ENCODE measurements at regions of chr12 and their contacts with region 1.

Region 1: DNA sequence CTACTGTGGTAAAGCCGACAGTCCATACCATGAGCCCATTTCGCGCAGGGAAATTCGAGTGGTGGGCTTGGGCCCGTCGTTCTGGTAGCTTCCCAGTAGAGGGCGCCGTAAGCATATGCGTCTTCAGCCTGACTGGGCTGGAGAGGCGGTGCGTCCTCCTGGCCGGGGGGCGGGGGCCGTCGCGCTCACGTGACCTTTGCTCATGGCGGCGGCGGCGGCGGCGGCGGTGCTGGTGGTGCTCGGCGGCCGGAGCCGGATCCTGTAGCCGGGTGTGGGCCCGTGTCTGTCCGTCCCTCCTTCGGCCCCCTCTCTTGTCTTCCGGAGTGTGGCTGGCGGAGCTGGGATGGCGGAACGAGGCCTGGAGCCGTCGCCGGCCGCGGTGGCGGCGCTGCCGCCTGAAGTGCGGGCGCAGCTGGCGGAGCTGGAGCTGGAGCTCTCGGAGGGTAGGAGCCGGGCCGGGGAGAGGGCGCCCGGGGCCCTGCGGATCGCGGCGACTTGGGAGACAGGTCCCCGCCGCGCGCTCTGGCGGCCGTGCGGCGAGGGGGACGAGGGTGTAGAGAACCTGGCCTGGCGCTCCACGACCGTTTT is at the start of gene DIP2B:
- DNase-seq: peak; percentile 96
- ATAC-seq: peak; percentile 95 to 99 (median 96)
- H3K4me3 ChIP-seq: peak within 1 kb of the TSS; percentile 68 to 95 (median 86)
- H3K27ac ChIP-seq: peak within 1 kb of the TSS; percentile 74 to 97 (median 94)
- H3K4me1 ChIP-seq: peaks cover 4 to 53% (median 46%) of the 10 kb centered on the region in 9 donors
- H3K27me3 ChIP-seq: no peaks in the 10 kb centered on the region
- CTCF ChIP-seq: peak; percentile 87 to 98 (median 94)
- total RNA-seq, gene DIP2B: 11.7 to 21.5 (median 16.2) TPM

Region 2: GRCh38 chr12:50572271-50572670 is 67.4 kb after region 1 on chr12:
- intact Hi-C with region 1: loop called in 2 of 10 experiments (anchors 5 kb)
- DNase-seq: no peak
- ATAC-seq: peak in 5 of 8 donors; percentile 43 to 77 (median 64)
- H3K4me3 ChIP-seq: no peak overlapping the region
- H3K27ac ChIP-seq: peak overlapping the region in 2 of 10 donors; percentile 2 to 54
- H3K4me1 ChIP-seq: peaks cover 14 to 78% (median 71%) of the 10 kb centered on the region in 9 donors
- H3K27me3 ChIP-seq: no peaks in the 10 kb centered on the region
- CTCF ChIP-seq: no peak

Region 3: DNA sequence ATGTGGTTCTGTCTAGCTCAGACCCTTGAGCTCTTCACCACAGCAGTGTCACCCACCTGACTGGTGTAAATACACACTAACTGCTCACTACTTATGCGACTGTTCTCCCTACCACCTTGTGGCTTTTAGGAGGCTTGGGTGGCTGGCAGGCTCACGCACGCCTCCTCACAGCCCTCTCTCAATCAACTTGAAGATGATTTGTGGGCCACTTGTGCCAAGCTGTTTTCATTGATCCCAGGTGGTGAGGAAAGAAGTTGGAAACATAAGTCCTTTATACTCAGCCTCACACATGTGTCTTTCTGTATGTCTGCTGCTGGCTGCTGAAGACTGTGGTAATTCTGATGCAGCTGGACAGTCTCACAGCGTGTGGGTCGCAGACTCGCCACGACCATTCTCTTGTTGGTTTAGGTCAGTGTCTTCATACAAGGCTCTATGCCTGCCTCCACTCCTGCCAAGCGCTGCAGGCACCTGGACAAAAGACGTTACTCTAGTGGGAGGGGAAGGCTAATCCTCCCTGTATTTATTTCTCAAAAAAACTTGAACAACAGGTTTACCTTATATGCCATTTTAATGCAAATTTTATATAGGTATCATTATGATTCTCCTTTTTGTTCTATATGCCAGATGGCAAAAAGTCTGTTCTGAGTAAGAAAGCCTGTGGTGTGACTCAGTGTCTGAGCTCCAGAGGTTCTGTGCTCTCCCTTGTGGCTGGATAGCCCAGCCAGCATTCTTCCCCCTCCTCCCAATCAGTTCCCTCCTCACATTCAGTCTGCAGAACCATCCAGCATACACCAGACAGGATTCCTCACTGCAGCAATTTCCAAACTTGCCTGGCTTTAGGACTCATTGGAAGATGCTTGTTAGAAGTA is 115.5 kb after region 1 on chr12:
- intact Hi-C with region 1: loop called in 1 of 10 experiments (anchors 5 kb)
- DNase-seq: no peak
- ATAC-seq: peak in 7 of 8 donors; percentile 58 to 77 (median 66)
- H3K4me3 ChIP-seq: no peak overlapping the region
- H3K27ac ChIP-seq: peak overlapping the region in 1 of 10 donors; percentile 21
- H3K4me1 ChIP-seq: peaks cover 0 to 76% (median 63%) of the 10 kb centered on the region in 9 donors
- H3K27me3 ChIP-seq: no peaks in the 10 kb centered on the region
- CTCF ChIP-seq: no peak

Region 4: DNA sequence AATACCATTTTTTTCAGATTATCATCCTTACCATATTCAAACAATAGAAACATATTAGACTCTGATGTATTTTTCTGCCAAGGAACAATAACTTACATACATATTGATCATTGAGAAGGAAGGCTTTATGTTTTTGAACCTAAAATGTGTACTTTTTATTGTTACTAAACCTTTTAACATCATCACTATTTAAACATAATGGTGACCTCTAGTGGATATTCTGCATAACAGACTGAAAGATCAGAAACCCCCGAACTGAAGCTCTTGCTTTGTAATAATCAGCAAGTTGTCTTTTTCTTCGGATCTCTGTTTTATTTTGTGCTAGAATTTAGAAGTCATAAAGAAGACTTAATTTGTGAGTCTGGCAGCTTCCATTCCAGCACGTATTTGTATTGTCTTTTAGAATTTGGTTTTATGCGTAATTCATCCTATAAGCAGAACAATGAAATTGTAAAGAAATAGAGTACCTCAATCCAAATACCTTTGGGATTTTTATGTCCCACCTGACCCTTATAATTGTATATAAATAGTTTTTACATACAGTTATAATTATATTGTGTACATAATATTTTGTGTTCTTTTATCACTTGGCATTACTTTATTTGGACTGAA is 133.1 kb after region 1 on chr12:
- intact Hi-C with region 1: loop called (anchors 1 to 5 kb)
- DNase-seq: no peak
- ATAC-seq: peak in 3 of 8 donors; percentile 50 to 58 (median 56)
- H3K4me3 ChIP-seq: no peak overlapping the region
- H3K27ac ChIP-seq: no peak overlapping the region
- H3K4me1 ChIP-seq: peaks cover 0 to 50% (median 39%) of the 10 kb centered on the region in 9 donors
- H3K27me3 ChIP-seq: no peaks in the 10 kb centered on the region
- CTCF ChIP-seq: peak; percentile 38 to 85 (median 72)

Region 5: DNA sequence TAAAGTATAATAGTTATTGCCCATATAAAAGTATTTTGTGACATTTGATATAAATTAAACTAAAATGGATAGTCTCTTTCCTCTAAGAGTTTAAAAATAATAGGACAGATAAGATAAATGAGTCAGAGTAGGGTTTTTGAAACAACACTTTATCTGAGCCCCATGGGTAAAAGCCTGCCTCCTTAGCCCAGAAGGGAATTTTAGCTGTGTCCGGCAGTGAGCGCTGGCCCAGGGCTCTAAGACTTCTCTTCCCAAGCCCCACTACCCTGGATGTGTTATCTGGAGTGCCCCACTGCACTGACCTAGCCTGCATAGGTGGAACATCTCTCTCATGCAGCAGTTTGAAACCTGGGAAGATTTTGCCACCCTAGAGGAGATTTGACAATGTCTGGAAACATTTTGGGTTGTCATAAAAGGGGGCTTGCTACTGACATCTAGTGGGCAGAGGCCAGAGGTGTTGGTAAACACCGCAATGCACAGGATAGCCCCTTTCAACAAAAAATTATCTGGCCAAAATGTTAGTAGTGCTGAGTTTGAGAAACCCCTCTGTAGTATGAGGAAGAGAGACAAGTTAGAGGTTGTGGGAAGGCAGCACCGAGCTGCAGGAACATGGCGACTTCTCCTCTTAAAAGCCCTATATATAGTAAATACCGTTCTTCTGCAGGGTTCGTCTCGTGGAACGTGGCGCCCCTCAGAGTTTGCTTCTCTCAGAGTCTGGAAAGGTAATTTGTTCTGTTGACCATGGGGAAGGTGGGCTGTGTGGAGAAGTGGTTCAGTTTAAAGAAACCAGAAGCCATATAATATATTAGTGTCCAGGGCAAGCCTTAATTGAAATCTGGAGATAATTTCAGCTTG is 229.7 kb after region 1 on chr12:
- intact Hi-C with region 1: loop called in 8 of 10 experiments (anchors 2 to 10 kb)
- DNase-seq: no peak
- ATAC-seq: peak in 6 of 8 donors; percentile 24 to 68 (median 52)
- H3K4me3 ChIP-seq: no peak overlapping the region
- H3K27ac ChIP-seq: no peak overlapping the region
- H3K4me1 ChIP-seq: no peaks in the 10 kb centered on the region
- H3K27me3 ChIP-seq: no peaks in the 10 kb centered on the region
- CTCF ChIP-seq: peak; percentile 31 to 71 (median 60)